Psoas muscle (tissue), 8 donors: ENCODE measurements at regions of chr4 and their contacts with region 1.

Region 1: GRCh38 chr4:70993181-70994068 is at the start of gene DCK:
- DNase-seq: peak; percentile 92 to 96
- ATAC-seq: peak; percentile 99 to 100 (median 99)
- H3K4me3 ChIP-seq: peak within 1 kb of the TSS; percentile 92
- H3K27ac ChIP-seq: peak within 1 kb of the TSS; percentile 86
- H3K4me1 ChIP-seq: peaks cover 26% of the 10 kb centered on the region
- H3K27me3 ChIP-seq: no peaks in the 10 kb centered on the region
- CTCF ChIP-seq: no peak
- total RNA-seq, gene DCK: 4.5 to 6.9 (median 5.8) TPM

Region 2: DNA sequence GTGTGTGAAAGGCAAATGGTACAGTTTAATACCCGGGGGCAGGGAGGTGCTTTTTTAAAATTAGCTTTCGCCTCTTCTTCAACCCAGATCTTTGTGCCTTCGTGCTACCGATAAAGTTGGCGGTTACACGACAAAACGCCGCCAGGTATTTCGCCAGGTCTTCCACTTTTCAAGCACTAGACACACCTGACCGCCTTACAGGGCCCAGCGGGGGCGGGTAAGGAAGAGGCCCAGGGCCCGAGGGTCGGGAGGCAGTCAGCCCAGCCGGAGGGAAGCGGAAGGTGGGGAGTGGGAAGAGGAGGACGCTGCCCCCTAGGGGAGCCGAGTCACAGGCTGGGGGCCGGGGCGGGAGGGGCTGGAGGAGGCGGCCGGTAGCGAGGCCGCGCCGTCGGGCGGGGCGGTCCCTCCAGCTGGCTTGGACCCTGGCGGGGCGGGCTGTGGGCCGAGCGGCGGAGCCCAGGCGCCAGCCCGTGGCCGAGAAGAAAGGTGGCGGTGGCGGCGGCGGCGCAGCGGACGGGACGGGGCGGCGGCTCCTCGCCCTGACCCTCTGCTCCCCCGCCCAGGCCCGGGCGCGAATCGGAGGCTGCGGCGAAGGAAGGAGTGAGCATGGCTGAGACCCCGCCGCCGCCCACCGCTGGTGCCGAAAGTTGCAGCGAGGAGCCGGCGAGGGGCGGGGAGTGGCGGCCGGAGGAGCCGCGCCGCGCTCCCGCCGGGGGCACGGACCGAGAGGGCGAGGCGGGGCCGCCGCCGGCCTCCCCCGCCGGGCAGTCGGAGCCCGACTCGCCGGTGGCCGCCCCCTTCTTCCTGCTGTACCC is 288.9 kb before region 1 on chr4:
- intact Hi-C with region 1: loop called in 1 of 2 experiments (anchors 10 kb)
- DNase-seq: peak; percentile 86 to 87
- ATAC-seq: peak; percentile 73 to 84 (median 76)
- H3K4me3 ChIP-seq: peak overlapping the region; percentile 85
- H3K27ac ChIP-seq: peak overlapping the region; percentile 98
- H3K4me1 ChIP-seq: peaks cover 20% of the 10 kb centered on the region
- H3K27me3 ChIP-seq: no peaks in the 10 kb centered on the region
- CTCF ChIP-seq: peak; percentile 33

Region 3: DNA sequence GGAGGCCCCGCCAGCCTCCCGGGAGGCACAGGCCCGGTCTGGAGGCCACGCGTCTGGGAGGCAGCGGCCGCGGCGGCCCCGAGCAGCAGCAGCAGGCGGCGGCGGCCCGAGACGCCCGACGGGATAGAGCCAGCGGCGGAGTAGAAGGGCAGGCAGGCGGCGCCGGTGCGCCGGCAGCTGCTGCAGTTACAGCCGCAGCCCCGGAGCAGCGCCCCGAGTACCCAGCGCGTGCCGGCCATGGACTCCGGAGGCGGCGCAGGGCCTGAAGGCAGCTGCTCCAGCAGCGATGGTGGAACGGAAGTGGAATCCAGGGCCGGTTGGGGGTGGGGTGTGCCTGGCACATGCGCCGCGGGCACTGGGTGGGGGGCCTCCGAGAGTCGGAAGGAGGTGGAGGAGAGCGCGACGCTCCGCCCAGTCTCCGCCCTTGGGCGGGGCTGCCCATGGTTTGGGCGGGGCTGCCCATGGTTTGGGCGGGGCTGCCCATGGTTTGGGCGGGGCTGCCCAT is 153.8 kb before region 1 on chr4 and contains the start of gene GRSF1:
- intact Hi-C with region 1: loop called in 1 of 2 experiments (anchors 10 kb)
- DNase-seq: peak; percentile 95 to 97
- ATAC-seq: peak; percentile 95 to 97 (median 96)
- H3K4me3 ChIP-seq: peak within 1 kb of the TSS; percentile 95
- H3K27ac ChIP-seq: peak within 1 kb of the TSS; percentile 97
- H3K4me1 ChIP-seq: peaks cover 19% of the 10 kb centered on the region
- H3K27me3 ChIP-seq: no peaks in the 10 kb centered on the region
- CTCF ChIP-seq: peak; percentile 21
- total RNA-seq, gene GRSF1: 114 to 144 (median 130) TPM

Region 4: GRCh38 chr4:70901984-70902576 is 91.3 kb before region 1 on chr4 and contains the start of gene MOB1B:
- intact Hi-C with region 1: loop called in 1 of 2 experiments (anchors 5 kb)
- DNase-seq: peak; percentile 87 to 90
- ATAC-seq: peak; percentile 95 to 97 (median 96)
- H3K4me3 ChIP-seq: peak within 1 kb of the TSS; percentile 90
- H3K27ac ChIP-seq: peak within 1 kb of the TSS; percentile 85
- H3K4me1 ChIP-seq: peaks cover 4% of the 10 kb centered on the region
- H3K27me3 ChIP-seq: no peaks in the 10 kb centered on the region
- CTCF ChIP-seq: peak; percentile 43
- total RNA-seq, gene MOB1B: 9.8 to 22.3 (median 12.8) TPM